ENCODE measurements at regions of chr18 and their contacts with region 1.

Region 1: GRCh38 chr18:9913526-9914333 is at the start of gene VAPA:
- DNase-seq: peak; percentile 85 to 99 (median 91)
- ATAC-seq: peak; percentile 81
- H3K4me3 ChIP-seq: peak within 1 kb of the TSS; percentile 68
- H3K4me3 Mint-ChIP-seq: peak within 1 kb of the TSS; percentile 95
- H3K27ac ChIP-seq: peak within 1 kb of the TSS; percentile 93 to 94
- H3K27ac Mint-ChIP-seq: peak within 1 kb of the TSS; percentile 98
- H3K4me1 ChIP-seq: peaks cover 21% of the 10 kb centered on the region
- H3K4me1 Mint-ChIP-seq: peaks cover 31% of the 10 kb centered on the region
- H3K27me3 ChIP-seq: no peaks in the 10 kb centered on the region
- H3K27me3 Mint-ChIP-seq: peaks cover 8% of the 10 kb centered on the region
- CTCF ChIP-seq: no peak
- total RNA-seq, gene VAPA: 162 to 177 TPM

Region 2: GRCh38 chr18:8704361-8705279 is 1209.1 kb before region 1 on chr18:
- CTCF ChIA-PET with region 1: no interaction called
- POLR2A ChIA-PET with region 1: no interaction called
- intact Hi-C with region 1: loop called in 1 of 2 experiments (anchors 5 kb)
- DNase-seq: peak; percentile 65 to 93 (median 86)
- ATAC-seq: peak; percentile 90
- H3K4me3 ChIP-seq: peak overlapping the region; percentile 87
- H3K4me3 Mint-ChIP-seq: peak overlapping the region; percentile 91
- H3K27ac ChIP-seq: no peak overlapping the region
- H3K27ac Mint-ChIP-seq: no peak overlapping the region
- H3K4me1 ChIP-seq: peaks cover 28% of the 10 kb centered on the region
- H3K4me1 Mint-ChIP-seq: peaks cover 22% of the 10 kb centered on the region
- H3K27me3 ChIP-seq: peaks cover 53 to 59% of the 10 kb centered on the region in 2 experiments
- H3K27me3 Mint-ChIP-seq: peaks cover 81% of the 10 kb centered on the region
- CTCF ChIP-seq: no peak

Region 3: DNA sequence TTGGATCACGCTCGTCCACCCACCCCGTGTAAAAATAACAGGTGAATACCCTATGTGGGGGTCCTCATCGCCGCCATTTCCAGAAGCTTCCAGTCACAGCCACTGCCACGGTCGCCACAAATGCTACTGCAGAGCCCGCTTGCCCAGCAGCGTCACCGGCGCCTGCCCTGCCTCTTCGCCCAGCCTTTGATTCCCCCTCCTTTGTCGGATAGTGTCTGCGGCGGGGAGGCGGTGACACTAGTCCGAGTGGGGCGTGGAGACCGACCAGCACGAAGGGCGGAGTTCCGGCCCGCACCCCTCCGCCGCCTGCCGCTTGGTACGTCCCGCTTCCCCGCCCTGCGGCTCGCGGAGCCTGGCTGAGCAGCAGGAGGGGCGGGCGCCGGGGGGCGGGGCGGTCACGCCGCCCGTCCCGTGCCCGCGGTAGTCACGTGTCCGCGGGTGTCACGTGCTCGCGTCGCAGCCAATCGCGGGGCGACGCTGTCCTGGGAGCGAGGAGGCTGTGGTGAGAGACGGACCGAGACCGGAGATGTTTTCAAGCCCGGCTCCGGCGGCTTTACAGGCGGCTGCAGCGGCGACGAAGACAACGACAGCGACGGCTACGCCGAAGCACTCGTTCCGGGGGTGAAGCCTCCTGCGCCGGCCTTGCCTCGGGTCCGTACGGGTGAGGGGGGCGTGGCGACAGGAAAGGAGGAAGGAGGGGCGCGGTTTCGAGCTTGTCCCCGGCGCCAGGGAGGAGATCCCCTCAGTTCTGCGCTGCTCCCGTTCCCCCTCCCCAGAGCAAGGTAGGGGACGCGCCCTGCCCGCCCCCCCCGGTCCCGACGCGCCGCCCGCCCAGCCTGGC is 777.2 kb before region 1 on chr18 and contains the start of gene ANKRD12:
- CTCF ChIA-PET with region 1: no interaction called
- POLR2A ChIA-PET with region 1: interaction called, 14 read pairs
- intact Hi-C with region 1: no loop called
- DNase-seq: peak; percentile 94 to 99 (median 98)
- ATAC-seq: peak; percentile 70
- H3K4me3 ChIP-seq: peak within 1 kb of the TSS; percentile 83
- H3K4me3 Mint-ChIP-seq: peak within 1 kb of the TSS; percentile 98
- H3K27ac ChIP-seq: peak within 1 kb of the TSS; percentile 94 to 96
- H3K27ac Mint-ChIP-seq: peak within 1 kb of the TSS; percentile 99
- H3K4me1 ChIP-seq: peaks cover 24% of the 10 kb centered on the region
- H3K4me1 Mint-ChIP-seq: peaks cover 75% of the 10 kb centered on the region
- H3K27me3 ChIP-seq: no peaks in the 10 kb centered on the region
- H3K27me3 Mint-ChIP-seq: no peaks in the 10 kb centered on the region
- CTCF ChIP-seq: no peak
- total RNA-seq, gene ANKRD12: 160 to 164 TPM

Region 4: DNA sequence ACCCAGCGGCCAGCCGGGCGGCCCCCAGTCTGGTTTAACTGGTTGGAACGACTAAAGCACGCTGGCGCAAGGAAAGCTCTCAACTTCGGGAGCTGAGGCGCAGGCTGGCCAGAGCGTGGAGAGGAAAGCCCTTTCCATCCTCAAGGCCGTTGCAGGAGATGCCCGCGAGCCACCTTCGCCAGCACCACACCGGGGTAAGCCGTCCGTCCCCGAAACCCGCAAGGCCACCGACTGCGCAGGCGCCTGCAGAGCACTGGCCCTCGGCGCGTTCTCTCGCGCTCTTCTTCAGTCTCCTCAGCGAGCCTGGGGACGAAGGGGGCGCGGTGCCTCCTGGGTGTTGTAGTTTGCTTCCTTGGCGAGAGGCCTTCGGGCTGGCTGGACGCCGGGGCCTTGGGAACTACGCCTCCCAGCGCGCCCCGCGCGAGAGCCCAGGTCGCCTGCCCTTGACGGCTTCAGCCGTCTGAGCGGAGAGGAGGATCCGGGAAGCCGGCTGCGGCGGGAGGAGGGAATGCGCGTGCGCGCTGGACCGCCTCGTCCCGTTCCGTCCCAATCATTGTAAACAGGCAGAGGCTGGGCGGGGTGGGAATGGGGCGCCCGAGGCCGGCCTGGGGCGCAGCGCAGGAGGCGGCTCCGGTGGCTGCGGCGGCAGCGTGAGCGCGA is 438.6 kb before region 1 on chr18 and contains the start of gene RALBP1:
- CTCF ChIA-PET with region 1: no interaction called
- POLR2A ChIA-PET with region 1: interaction called, 4 read pairs
- intact Hi-C with region 1: loop called in 1 of 2 experiments (anchors 5 kb)
- DNase-seq: peak; percentile 93 to 99 (median 97)
- ATAC-seq: peak; percentile 98
- H3K4me3 ChIP-seq: peak within 1 kb of the TSS; percentile 72
- H3K4me3 Mint-ChIP-seq: peak within 1 kb of the TSS; percentile 98
- H3K27ac ChIP-seq: peak within 1 kb of the TSS; percentile 57 to 59
- H3K27ac Mint-ChIP-seq: peak within 1 kb of the TSS; percentile 92
- H3K4me1 ChIP-seq: peaks cover 25% of the 10 kb centered on the region
- H3K4me1 Mint-ChIP-seq: peaks cover 33% of the 10 kb centered on the region
- H3K27me3 ChIP-seq: no peaks in the 10 kb centered on the region
- H3K27me3 Mint-ChIP-seq: peaks cover 4% of the 10 kb centered on the region
- CTCF ChIP-seq: no peak
- total RNA-seq, gene RALBP1: 6.5 to 7.8 TPM

Region 5: DNA sequence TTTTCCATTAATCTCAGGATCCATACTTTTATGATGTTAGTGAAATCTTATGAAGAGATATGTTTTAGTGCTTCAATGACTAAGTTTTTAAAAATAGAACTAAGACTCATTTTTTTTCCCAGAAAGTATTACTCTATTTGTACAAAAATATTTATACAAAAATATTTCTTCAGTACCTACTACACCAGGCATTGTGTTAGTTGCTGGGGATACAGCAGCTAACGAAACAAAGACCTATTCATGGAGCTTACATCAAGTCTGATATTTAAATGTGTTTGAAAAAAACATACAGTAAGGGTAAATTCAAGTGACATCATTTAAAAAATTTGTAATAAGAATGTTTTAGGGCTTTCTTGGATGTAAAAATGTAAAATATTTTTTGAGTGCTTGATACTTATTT is 11.6 kb after region 1 on chr18:
- CTCF ChIA-PET with region 1: interaction called, 3 read pairs
- POLR2A ChIA-PET with region 1: interaction called, 23 read pairs
- intact Hi-C with region 1: no loop called
- DNase-seq: no peak
- ATAC-seq: no peak
- H3K4me3 ChIP-seq: no peak overlapping the region
- H3K4me3 Mint-ChIP-seq: no peak overlapping the region
- H3K27ac ChIP-seq: no peak overlapping the region
- H3K27ac Mint-ChIP-seq: peak overlapping the region; percentile 14
- H3K4me1 ChIP-seq: peaks cover 17% of the 10 kb centered on the region
- H3K4me1 Mint-ChIP-seq: peaks cover 49% of the 10 kb centered on the region
- H3K27me3 ChIP-seq: no peaks in the 10 kb centered on the region
- H3K27me3 Mint-ChIP-seq: no peaks in the 10 kb centered on the region
- CTCF ChIP-seq: no peak

Region 6: DNA sequence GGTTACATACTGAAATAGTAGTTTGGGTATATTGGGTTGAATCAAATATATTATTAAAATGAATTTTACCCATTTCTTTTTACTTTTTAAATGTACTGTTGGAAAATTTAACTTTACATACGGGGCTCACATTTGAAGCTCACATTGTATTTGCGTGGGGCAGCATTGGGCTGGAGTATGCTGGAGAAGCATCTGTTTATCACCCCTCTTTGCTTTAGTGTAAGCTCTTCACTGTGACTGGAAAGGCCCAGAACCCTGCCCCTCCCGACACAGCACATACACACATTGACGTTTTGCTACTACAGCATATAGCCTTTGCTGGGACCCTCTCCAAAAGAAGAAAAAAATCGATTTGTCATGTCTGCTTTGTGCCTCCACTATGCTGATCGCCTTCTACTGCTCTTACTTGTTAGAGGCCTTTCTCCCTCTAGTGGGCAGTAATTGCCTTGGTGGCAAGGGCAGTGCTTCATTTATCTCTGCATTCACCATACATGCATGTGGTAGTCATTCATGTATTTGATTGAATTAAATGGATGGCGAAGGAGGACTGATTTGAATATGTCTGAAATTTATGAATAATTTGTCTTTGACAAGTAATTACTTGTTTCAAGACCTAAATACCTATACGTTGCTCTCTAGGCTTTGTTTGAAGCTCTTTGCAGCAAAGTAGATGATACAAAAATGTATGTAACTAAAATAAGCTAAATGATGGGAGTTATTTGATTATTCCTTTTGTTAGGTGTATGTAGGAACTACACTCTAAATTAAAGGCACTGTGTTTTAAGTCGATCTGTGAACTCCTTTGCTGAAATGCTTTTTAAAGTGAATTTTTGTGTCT is 37.5 kb after region 1 on chr18:
- CTCF ChIA-PET with region 1: no interaction called
- POLR2A ChIA-PET with region 1: interaction called, 8 read pairs
- intact Hi-C with region 1: loop called (anchors 2 to 5 kb)
- DNase-seq: peak in 4 of 14 experiments; percentile 14 to 56 (median 32)
- ATAC-seq: peak; percentile 48
- H3K4me3 ChIP-seq: no peak overlapping the region
- H3K4me3 Mint-ChIP-seq: no peak overlapping the region
- H3K27ac ChIP-seq: no peak overlapping the region
- H3K27ac Mint-ChIP-seq: no peak overlapping the region
- H3K4me1 ChIP-seq: no peaks in the 10 kb centered on the region
- H3K4me1 Mint-ChIP-seq: peaks cover 15% of the 10 kb centered on the region
- H3K27me3 ChIP-seq: no peaks in the 10 kb centered on the region
- H3K27me3 Mint-ChIP-seq: no peaks in the 10 kb centered on the region
- CTCF ChIP-seq: peak; percentile 36

Region 7: GRCh38 chr18:11851146-11851805 is 1937.5 kb after region 1 on chr18 and contains the start of gene CHMP1B:
- CTCF ChIA-PET with region 1: no interaction called
- POLR2A ChIA-PET with region 1: interaction called, 7 read pairs
- intact Hi-C with region 1: loop called in 1 of 2 experiments (anchors 5 kb)
- DNase-seq: peak; percentile 95 to 99 (median 97)
- ATAC-seq: peak; percentile 74
- H3K4me3 ChIP-seq: peak within 1 kb of the TSS; percentile 64
- H3K4me3 Mint-ChIP-seq: peak within 1 kb of the TSS; percentile 100
- H3K27ac ChIP-seq: peak within 1 kb of the TSS; percentile 85 to 92
- H3K27ac Mint-ChIP-seq: peak within 1 kb of the TSS; percentile 97
- H3K4me1 ChIP-seq: peaks cover 27% of the 10 kb centered on the region
- H3K4me1 Mint-ChIP-seq: peaks cover 53% of the 10 kb centered on the region
- H3K27me3 ChIP-seq: no peaks in the 10 kb centered on the region
- H3K27me3 Mint-ChIP-seq: no peaks in the 10 kb centered on the region
- CTCF ChIP-seq: no peak
- total RNA-seq, gene CHMP1B: 64.4 to 67.4 TPM

Measured in CD4-positive, alpha-beta T cell (primary cell).